Cardiac septum (tissue), 1 donor: ENCODE measurements at regions of chr17 and their contacts with region 1.

Region 1: DNA sequence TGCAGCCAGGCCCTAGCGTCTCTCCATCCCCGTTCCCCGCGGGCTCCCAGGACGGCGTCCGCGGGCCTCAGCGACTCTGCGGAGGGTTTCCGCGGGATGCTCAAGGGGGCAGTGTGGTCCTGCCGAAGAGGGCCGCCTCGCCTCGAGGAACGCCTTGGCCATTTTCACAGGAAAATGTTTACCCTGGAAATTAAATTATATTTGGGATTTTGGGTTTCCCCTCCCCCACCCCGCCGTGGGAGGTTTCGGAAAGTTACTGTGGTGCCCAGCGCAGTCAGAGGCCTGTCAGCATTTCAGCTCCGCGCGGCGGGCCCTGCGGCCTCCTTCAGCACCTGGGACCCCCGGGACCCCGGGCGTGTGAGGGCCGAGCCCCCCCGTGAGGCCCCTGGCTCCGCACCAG is 94.5 kb downstream of the PCTP start:
- DNase-seq: peak; percentile 78

Region 2: GRCh38 chr17:56478836-56479447 is 633.6 kb after region 1 on chr17:
- intact Hi-C with region 1: loop called (anchors 10 kb)
- DNase-seq: no peak

Region 3: GRCh38 chr17:56592487-56593085 is 747.2 kb after region 1 on chr17:
- intact Hi-C with region 1: loop called (anchors 10 kb)
- DNase-seq: no peak